BJ (cell line): ENCODE measurements at regions of chr22 and their contacts with region 1.

Region 1: DNA sequence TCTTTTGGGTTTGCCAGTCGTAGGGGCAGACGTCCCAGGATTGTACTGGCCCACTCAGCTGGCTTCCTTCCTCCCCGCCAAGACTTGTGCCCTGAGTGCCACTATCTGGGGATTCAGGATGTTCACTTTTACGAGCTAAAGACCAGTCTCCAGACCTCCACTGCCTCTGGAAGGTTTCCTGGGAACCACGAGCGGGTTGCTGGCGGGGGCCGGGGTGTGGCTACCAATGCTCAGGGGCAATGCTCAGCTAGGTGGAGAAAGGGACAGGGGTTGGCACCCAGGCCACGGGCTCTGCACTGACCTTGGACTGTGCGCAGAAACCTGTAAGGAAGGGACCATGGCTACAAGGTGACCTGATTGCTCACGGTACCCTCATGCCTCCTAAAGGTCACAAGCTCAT is 2.2 kb downstream of the NEFH start:
- DNase-seq: no peak
- H3K4me3 ChIP-seq: no peak overlapping the region
- H3K27me3 ChIP-seq: peaks cover 37% of the 10 kb centered on the region
- CTCF ChIP-seq: no peak

Region 2: DNA sequence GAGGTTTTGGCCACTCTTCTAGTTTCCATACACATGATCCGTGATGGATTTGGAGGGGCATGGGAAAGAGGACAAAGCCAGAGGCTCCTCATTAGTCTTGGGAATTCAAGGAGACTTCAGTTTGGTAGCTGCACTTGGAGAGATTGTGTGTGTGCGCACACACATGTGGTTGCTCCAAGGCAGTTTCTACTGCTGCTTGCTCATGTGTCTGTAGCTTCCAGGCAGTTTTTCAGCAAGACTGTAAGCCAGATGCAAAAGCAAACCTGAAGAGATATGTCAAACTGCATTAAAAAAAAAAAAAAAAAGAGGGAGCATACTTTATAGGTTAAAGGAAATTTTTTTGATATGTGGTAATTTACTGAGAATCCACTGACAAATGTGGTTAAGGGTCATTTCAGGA is 1308.1 kb after region 1 on chr22:
- CTCF ChIA-PET with region 1: no interaction called
- POLR2A ChIA-PET with region 1: interaction called, 12 read pairs
- DNase-seq: no peak
- H3K4me3 ChIP-seq: no peak overlapping the region
- H3K27me3 ChIP-seq: no peaks in the 10 kb centered on the region
- CTCF ChIP-seq: no peak